ENCODE measurements at regions of chr4 and their contacts with region 1.

Region 1: DNA sequence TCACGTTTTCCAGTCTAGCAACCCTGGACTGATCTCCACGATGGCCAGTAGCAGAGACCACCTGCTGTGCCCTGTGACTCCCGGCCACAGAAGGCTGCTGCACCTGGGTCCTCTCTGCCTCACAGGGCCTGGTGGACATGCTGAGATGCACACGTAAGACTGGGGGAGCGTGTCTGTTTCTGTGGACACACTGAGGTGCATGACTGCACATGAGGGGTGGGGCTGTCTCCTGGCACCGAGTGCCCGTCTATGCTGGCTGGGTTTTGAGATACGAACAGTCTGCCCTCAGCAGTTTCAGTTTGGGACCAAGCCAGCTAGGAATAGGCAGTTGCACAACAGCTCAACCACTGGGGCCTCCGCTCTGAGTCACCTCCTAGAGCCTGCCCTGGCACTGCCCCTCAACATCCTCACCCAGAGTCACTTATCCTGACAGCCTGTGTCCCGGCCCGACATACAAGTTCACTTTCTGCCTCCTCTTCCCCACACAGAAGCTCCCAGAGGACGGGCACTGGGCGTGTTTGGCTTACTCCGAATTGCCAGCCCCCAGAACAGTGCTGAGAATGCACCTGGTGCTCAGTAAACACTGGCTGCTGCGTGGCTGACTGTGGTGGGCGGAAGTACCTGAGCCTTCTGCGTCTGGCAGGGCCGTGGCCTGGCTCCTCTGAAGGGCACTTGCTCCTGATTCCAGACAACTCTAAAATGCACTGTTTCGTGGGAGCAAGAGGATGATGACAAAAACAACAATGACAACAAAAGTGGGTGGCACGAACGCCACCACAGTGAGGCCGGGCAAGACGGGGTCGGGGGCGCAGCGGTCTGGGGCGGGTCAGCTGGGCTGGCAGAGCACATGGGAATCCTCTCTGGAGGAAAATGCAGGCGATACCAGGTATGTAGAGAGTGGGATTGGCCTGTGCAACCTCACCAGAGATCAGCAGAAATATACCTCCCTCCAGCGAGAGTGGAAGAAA is 30.9 kb downstream of the RNF212 start:
- DNase-seq: peak; percentile 98
- H3K4me3 ChIP-seq: no peak overlapping the region
- H3K27ac ChIP-seq: peak overlapping the region; percentile 68
- H3K4me1 ChIP-seq: peaks cover 24% of the 10 kb centered on the region
- H3K27me3 ChIP-seq: no peaks in the 10 kb centered on the region
- CTCF ChIP-seq: no peak

Region 2: GRCh38 chr4:1011022-1011694 is 71.3 kb before region 1 on chr4 and contains the start of gene FGFRL1:
- CTCF ChIA-PET with region 1: no interaction called
- dilution Hi-C with region 1: no loop called
- in situ Hi-C with region 1: no loop called
- intact Hi-C with region 1: loop called (anchors 2 kb)
- DNase-seq: peak; percentile 86
- H3K4me3 ChIP-seq: peak within 1 kb of the TSS; percentile 39 to 49 (median 47)
- H3K27ac ChIP-seq: peak within 1 kb of the TSS; percentile 39
- H3K4me1 ChIP-seq: peaks cover 20% of the 10 kb centered on the region
- H3K27me3 ChIP-seq: peaks cover 3% of the 10 kb centered on the region
- CTCF ChIP-seq: no peak
- total RNA-seq, gene FGFRL1: 12.8 to 15.0 TPM

Region 3: DNA sequence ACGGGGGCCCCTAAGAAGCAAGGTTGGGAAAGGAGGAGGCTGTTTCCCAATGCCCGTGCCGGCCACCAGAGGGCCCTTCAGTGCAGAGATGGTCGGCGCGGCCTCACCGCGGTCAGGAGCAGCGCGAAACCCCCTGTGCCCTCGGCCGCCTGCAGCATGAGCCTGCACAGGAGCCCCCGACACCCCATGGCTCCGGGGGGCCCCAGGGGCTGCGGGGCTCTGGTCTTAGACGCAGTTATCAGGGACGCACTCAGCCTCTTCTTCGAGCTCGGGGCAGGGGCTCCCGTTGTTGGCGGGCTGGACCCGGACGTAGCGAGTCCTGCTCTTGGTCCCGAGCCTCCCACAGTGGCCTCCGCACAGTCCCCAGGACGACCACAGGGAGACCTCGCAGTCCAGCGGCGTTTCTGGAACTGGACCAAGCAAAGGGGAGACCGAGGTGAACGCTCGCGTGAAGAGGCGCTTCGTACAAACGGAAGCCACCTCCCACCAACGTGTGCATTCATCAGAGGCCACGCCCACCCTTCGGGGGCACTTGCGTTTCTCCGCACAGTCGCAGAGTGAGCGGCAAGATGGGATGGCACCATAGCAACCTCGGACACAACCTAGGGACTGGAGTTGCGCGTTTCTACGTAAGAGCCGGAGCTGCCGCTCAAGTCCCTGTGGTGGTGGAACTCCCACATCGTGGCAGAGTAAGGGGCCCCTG is 84.9 kb after region 1 on chr4:
- CTCF ChIA-PET with region 1: no interaction called
- dilution Hi-C with region 1: no loop called
- in situ Hi-C with region 1: no loop called
- intact Hi-C with region 1: no loop called
- DNase-seq: peak; percentile 31
- H3K4me3 ChIP-seq: peak overlapping the region in 1 of 3 experiments; percentile 43
- H3K27ac ChIP-seq: no peak overlapping the region
- H3K4me1 ChIP-seq: peaks cover 4% of the 10 kb centered on the region
- H3K27me3 ChIP-seq: peaks cover 22% of the 10 kb centered on the region
- CTCF ChIP-seq: peak; percentile 67 to 92